HepG2 (cell line): ENCODE measurements at regions of chr22 and their contacts with region 1.

Region 1: GRCh38 chr22:31661851-31662656 is at the start of gene PISD:
- DNase-seq: peak; percentile 92
- ATAC-seq: peak; percentile 92
- H3K4me3 ChIP-seq: peak within 1 kb of the TSS; percentile 83 to 100 (median 93)
- H3K27ac ChIP-seq: peak within 1 kb of the TSS; percentile 83
- H3K4me1 ChIP-seq: peaks cover 42% of the 10 kb centered on the region
- H3K27me3 ChIP-seq: no peaks in the 10 kb centered on the region; a peak in 2 of 5 replicates
- CTCF ChIP-seq: no peak
- EP300 ChIP-seq: peak in 1 of 2 experiments; percentile 48; a peak in 1 of 4 replicates
- POLR2A ChIP-seq: peak; percentile 90
- RAD21 ChIP-seq: no peak
- total RNA-seq, gene PISD: 30.0 and 47.7 TPM in 2 replicates

Region 2: GRCh38 chr22:31646186-31647089 is 15.6 kb before region 1 on chr22:
- CTCF ChIA-PET with region 1: no interaction called
- POLR2A ChIA-PET with region 1: interaction called, 33 read pairs
- in situ Hi-C with region 1: no loop called
- intact Hi-C with region 1: no loop called
- DNase-seq: peak; percentile 87
- ATAC-seq: peak; percentile 60
- H3K4me3 ChIP-seq: no peak overlapping the region
- H3K27ac ChIP-seq: peak overlapping the region; percentile 55
- H3K4me1 ChIP-seq: peaks cover 31% of the 10 kb centered on the region
- H3K27me3 ChIP-seq: no peaks in the 10 kb centered on the region
- CTCF ChIP-seq: no peak
- EP300 ChIP-seq: no peak
- POLR2A ChIP-seq: no peak
- RAD21 ChIP-seq: no peak

Region 3: GRCh38 chr22:31749636-31750364 is 87.7 kb after region 1 on chr22 and contains the start of gene PRR14L:
- CTCF ChIA-PET with region 1: no interaction called
- POLR2A ChIA-PET with region 1: interaction called, 26 read pairs
- in situ Hi-C with region 1: no loop called
- intact Hi-C with region 1: loop called (anchors 5 kb)
- DNase-seq: peak; percentile 91
- ATAC-seq: peak; percentile 83
- H3K4me3 ChIP-seq: peak within 1 kb of the TSS; percentile 79 to 96 (median 89)
- H3K27ac ChIP-seq: peak within 1 kb of the TSS; percentile 93
- H3K4me1 ChIP-seq: peaks cover 41% of the 10 kb centered on the region
- H3K27me3 ChIP-seq: peaks cover 0 to 6% of the 10 kb centered on the region in 2 experiments; a peak in 1 of 5 replicates
- CTCF ChIP-seq: peak; percentile 31; the same call in 1 of the 2 replicates
- EP300 ChIP-seq: peak; percentile 31 to 92; a peak in 3 of 4 replicates
- POLR2A ChIP-seq: peak; percentile 85 to 89
- RAD21 ChIP-seq: peak; percentile 69
- total RNA-seq, gene PRR14L: 16.5 and 36.4 TPM in 2 replicates

Region 4: GRCh38 chr22:31818481-31819392 is 156.7 kb after region 1 on chr22:
- CTCF ChIA-PET with region 1: no interaction called
- POLR2A ChIA-PET with region 1: interaction called, 17 read pairs
- in situ Hi-C with region 1: no loop called
- intact Hi-C with region 1: loop called (anchors 10 kb)
- DNase-seq: no peak
- ATAC-seq: no peak
- H3K4me3 ChIP-seq: no peak overlapping the region
- H3K27ac ChIP-seq: no peak overlapping the region
- H3K4me1 ChIP-seq: peaks cover 41% of the 10 kb centered on the region
- H3K27me3 ChIP-seq: no peaks in the 10 kb centered on the region
- CTCF ChIP-seq: no peak
- EP300 ChIP-seq: no peak
- POLR2A ChIP-seq: no peak
- RAD21 ChIP-seq: no peak

Region 5: DNA sequence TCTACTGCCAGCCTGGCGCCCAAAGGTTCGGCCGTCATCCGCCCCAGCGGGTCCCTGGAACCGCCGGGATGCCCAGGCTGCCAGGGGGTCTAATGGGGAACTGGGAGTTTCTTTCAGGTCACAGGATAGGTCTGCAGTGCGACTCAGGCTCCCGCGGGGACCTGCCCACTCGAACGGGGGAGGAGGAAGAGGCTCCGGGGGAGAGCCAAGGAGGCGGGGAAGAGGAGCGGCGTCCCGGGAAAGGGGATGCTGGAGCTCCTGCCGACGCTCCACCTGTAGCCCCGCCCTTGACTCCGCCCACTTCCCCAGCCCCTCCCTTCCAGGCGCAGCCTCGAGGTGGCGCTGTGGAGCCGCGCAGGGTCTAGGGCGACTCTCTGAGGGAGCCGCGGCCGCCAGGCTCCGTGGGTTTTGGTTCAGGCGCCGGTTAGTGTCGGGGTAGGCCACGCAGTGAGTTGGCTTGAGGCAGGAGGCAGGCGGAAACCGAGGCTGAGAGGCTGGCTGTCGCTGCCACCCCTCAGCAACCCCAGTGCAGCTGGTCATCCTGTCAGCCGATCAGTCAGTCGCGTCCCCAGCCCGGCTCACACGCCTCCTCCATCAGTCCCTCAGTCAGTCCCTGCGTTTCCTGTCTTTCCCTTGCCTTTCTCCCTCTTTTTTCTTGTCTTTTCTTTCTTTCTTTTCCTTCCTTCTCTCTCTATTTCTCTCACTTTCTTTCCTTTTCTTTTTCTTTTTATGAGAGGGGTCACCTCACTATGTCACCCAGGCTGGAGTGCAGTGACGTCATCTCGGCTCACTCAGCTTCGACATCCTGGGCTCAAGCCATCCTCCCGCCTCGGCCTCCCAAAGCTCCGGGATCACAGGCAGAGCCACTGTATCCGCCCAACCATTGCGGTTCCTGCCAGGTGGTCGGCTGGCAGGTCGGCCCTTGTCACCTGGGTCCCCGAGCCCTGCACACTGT is 308.7 kb after region 1 on chr22:
- CTCF ChIA-PET with region 1: no interaction called
- POLR2A ChIA-PET with region 1: interaction called, 7 read pairs
- in situ Hi-C with region 1: loop called (anchors 5 kb)
- intact Hi-C with region 1: loop called (anchors 5 kb)
- DNase-seq: peak; percentile 31
- ATAC-seq: peak; percentile 83
- H3K4me3 ChIP-seq: peak overlapping the region; percentile 42 to 74 (median 46)
- H3K27ac ChIP-seq: no peak overlapping the region
- H3K4me1 ChIP-seq: peaks cover 27% of the 10 kb centered on the region
- H3K27me3 ChIP-seq: peaks cover 0 to 9% of the 10 kb centered on the region in 2 experiments; a peak in 3 of 5 replicates
- CTCF ChIP-seq: peak; percentile 94
- EP300 ChIP-seq: no peak
- POLR2A ChIP-seq: no peak
- RAD21 ChIP-seq: peak; percentile 51; the same call in 1 of the 2 replicates